WTC11 (cell line): ENCODE measurements at regions of chr17 and their contacts with region 1.

Region 1: GRCh38 chr17:19398301-19399181 is 11.6 kb upstream of the MFAP4 start:
- DNase-seq: no peak
- ATAC-seq: no peak
- H3K4me3 Mint-ChIP-seq: no peak overlapping the region
- H3K27ac Mint-ChIP-seq: peak overlapping the region; percentile 51; the same call in 1 of the 2 replicates
- H3K4me1 Mint-ChIP-seq: peaks cover 11% of the 10 kb centered on the region
- H3K27me3 Mint-ChIP-seq: no peaks in the 10 kb centered on the region; the same call in 1 of the 2 replicates
- CTCF ChIP-seq: no peak

Region 2: GRCh38 chr17:19377602-19378392 is 20.7 kb before region 1 on chr17:
- CTCF ChIA-PET with region 1: interaction called, 18 read pairs
- POLR2A ChIA-PET with region 1: no interaction called
- DNase-seq: peak; percentile 99
- ATAC-seq: peak; percentile 93
- H3K4me3 Mint-ChIP-seq: peak overlapping the region; percentile 99
- H3K27ac Mint-ChIP-seq: peak overlapping the region; percentile 97
- H3K4me1 Mint-ChIP-seq: peaks cover 16% of the 10 kb centered on the region
- H3K27me3 Mint-ChIP-seq: no peaks in the 10 kb centered on the region
- CTCF ChIP-seq: no peak

Region 3: DNA sequence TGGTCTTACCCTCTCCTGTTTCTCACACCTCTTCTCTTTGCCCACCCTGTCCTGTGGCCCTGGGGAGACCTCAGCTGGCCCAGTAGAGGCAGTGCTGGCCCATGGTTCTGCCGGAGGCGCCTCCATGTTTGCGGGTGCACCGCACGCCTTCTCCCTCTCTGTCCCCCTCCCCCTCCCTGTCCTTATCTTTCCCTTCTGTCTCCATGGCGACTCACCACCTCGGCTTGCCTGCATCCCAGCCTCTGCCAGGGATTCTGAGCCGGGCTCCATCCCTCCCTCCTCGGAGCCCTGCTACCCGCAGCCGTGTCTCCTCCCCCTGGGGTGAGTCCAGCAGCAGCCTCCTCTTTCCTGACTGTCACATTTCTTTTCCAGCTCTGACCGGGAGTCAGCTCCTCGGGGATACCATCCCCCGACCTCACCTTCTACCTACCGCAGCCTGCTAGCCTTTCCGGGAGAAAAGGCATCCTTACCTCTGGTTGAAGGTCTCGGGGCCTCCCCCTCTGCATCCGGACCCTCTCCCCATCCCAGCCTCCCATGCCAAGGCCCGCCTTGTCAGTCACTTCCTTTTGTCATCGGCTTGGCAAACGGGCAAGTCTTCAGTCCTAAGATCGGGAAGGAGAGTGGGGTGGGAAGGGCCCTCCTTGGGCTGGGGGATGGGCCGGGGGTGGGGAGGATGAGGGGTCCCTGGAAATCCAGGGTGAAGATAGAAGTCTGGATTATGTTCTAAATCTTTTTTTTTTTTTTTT is 12.5 kb after region 1 on chr17 and contains the start of gene RNF112:
- CTCF ChIA-PET with region 1: interaction called, 13 read pairs
- POLR2A ChIA-PET with region 1: no interaction called
- DNase-seq: no peak
- ATAC-seq: peak; percentile 57
- H3K4me3 Mint-ChIP-seq: peak within 1 kb of the TSS; percentile 45
- H3K27ac Mint-ChIP-seq: no peak within 1 kb of the TSS; the same call in 1 of the 2 replicates
- H3K4me1 Mint-ChIP-seq: peaks cover 21% of the 10 kb centered on the region
- H3K27me3 Mint-ChIP-seq: no peaks in the 10 kb centered on the region
- CTCF ChIP-seq: no peak
- total RNA-seq, gene RNF112: 4.5 to 5.1 TPM (median 4.9 TPM) in 3 replicates

Region 4: DNA sequence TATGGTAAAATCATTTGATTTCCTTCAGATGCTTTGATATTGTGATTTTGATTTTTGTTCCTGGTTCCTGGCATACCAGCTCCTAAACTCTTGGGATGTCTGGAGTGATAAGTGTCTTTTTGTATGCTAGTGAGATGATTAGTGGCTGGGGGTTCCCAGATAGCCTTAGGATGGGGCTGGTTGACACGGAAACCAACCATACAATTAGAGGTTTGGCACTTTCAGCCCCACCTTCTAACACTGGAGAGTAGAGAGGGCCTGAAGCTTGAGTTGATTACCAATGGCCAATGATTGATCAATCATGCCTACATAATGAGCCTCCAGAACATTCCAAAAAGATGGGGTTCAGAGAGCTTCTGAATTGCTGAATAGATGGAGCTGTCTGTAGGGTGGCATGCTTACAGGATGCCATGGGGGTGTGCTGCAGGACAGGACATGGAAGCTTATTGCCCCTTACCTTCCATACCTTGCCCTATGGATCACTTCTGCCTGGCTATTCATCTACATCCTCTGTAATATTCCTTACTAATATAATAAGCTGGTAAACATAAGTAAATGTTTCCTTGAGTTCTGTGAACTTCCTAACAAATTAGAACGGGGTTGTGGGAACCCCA is 35.3 kb after region 1 on chr17:
- CTCF ChIA-PET with region 1: interaction called, 11 read pairs
- POLR2A ChIA-PET with region 1: no interaction called
- DNase-seq: no peak
- ATAC-seq: peak; percentile 54
- H3K4me3 Mint-ChIP-seq: no peak overlapping the region; the same call in 1 of the 2 replicates
- H3K27ac Mint-ChIP-seq: peak overlapping the region; percentile 60
- H3K4me1 Mint-ChIP-seq: peaks cover 59% of the 10 kb centered on the region
- H3K27me3 Mint-ChIP-seq: no peaks in the 10 kb centered on the region
- CTCF ChIP-seq: no peak

Region 5: DNA sequence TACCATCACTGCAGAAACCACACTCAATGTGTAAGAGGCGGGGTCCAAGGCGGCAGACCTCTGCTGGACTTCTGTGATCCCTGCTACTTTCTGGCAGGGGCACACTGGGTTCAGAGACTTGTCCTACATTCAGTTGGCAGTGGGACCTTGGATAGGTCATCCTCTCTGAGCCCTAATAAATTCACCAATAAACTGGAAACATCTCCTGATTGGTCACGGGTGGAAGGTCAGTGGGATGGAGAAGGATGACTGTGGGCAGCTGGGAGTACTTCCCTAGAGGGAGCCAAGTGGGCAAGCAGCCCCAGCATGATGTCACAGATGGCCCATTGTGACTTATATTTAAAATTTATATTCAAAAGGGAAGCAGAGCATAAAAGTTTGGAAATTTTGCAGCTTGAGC is 62.2 kb after region 1 on chr17:
- CTCF ChIA-PET with region 1: interaction called, 17 read pairs
- POLR2A ChIA-PET with region 1: no interaction called
- DNase-seq: no peak
- ATAC-seq: peak; percentile 9
- H3K4me3 Mint-ChIP-seq: peak overlapping the region; percentile 21
- H3K27ac Mint-ChIP-seq: peak overlapping the region; percentile 83
- H3K4me1 Mint-ChIP-seq: peaks cover 90% of the 10 kb centered on the region
- H3K27me3 Mint-ChIP-seq: no peaks in the 10 kb centered on the region
- CTCF ChIP-seq: no peak